Esophagus squamous epithelium (tissue), 5 donors: ENCODE measurements at regions of chr1 and their contacts with region 1.

Region 1: GRCh38 chr1:158203693-158204457 is 23.2 kb downstream of the CD1D start:
- DNase-seq: no peak
- H3K4me3 ChIP-seq: no peak overlapping the region
- H3K27ac ChIP-seq: no peak overlapping the region
- H3K4me1 ChIP-seq: no peaks in the 10 kb centered on the region
- H3K27me3 ChIP-seq: peaks cover 0 to 21% (median 0%) of the 10 kb centered on the region in 4 donors
- CTCF ChIP-seq: peak; percentile 63 to 84 (median 73)
- POLR2A ChIP-seq: no peak

Region 2: DNA sequence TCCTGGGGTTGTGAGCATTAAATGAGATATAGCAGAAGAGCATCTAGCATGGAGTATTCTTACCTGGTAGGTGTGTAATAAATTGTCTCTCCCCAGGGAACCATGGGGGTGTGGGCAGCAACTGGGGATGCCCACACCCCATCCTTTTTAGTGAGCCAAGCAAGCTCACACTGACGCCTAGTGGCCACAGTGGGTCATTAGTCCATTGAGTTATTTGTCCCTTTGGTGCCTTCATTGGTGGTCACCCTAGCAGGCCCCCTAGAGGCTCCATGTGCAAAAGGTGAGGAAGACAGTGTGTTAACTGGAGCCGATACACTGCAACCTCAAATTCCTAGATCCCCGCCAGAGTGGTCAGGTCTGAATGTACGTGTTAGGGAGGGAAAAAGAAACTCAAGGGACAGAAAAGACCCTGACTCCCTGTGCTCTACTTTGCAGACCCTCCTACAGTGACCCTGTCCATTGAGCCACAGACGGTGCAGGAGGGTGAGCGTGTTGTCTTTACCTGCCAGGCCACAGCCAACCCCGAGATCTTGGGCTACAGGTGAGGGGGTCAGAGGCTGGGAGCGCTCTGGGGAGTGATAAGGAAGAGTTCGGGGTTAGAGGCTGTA is 116.5 kb before region 1 on chr1:
- intact Hi-C with region 1: no loop called
- DNase-seq: no peak
- H3K4me3 ChIP-seq: no peak overlapping the region
- H3K27ac ChIP-seq: no peak overlapping the region
- H3K4me1 ChIP-seq: no peaks in the 10 kb centered on the region
- H3K27me3 ChIP-seq: no peaks in the 10 kb centered on the region
- CTCF ChIP-seq: peak; percentile 51 to 85 (median 72)
- POLR2A ChIP-seq: no peak

Region 3: DNA sequence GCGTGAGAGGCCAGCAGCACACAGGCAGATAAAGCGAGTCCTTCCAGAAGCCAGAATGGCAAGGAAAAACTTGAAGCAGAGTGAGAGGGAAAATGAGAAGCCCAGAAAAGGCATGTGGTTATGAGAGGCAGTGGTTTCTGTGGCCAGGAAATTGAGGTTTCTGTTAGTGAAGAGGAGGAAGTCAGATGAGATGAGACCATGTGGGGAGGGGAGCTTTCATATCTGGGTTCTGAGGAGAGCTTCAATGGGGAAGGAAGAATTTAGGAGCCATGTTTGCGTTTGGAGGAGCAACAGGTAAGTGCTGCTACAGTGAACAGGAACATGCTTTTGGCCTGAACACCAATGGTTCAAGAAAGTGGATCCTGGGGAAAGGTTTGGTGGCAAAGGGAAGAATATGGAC is 44.2 kb after region 1 on chr1:
- intact Hi-C with region 1: no loop called
- DNase-seq: peak; percentile 3
- H3K4me3 ChIP-seq: no peak overlapping the region
- H3K27ac ChIP-seq: no peak overlapping the region
- H3K4me1 ChIP-seq: no peaks in the 10 kb centered on the region
- H3K27me3 ChIP-seq: peaks cover 0 to 5% (median 0%) of the 10 kb centered on the region in 4 donors
- CTCF ChIP-seq: no peak
- POLR2A ChIP-seq: no peak

Region 4: DNA sequence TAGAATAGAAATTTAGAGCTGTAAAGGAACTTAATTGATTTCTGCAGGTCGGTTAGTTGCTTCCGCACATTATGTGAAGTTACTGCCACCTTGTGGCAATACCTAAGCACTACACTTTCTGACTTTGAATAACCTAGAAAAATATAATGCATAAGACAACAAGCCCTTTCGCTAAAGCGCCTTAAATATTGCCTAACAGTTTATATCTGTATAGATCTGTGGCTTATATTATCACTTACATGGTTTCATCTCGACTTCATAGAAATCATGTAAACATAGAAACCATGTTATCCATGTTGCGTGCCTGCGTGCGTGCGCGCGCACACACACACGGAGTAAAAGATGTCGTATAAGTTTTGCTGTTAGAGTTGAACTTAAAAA is 794.9 kb after region 1 on chr1:
- intact Hi-C with region 1: loop called (anchors 10 kb)
- DNase-seq: no peak
- H3K4me3 ChIP-seq: peak overlapping the region; percentile 24 to 66 (median 46)
- H3K27ac ChIP-seq: peak overlapping the region; percentile 77 to 93 (median 90)
- H3K4me1 ChIP-seq: peaks cover 0 to 47% (median 7%) of the 10 kb centered on the region in 3 donors
- H3K27me3 ChIP-seq: no peaks in the 10 kb centered on the region
- CTCF ChIP-seq: peak; percentile 86 to 96 (median 92)
- POLR2A ChIP-seq: no peak

Region 5: DNA sequence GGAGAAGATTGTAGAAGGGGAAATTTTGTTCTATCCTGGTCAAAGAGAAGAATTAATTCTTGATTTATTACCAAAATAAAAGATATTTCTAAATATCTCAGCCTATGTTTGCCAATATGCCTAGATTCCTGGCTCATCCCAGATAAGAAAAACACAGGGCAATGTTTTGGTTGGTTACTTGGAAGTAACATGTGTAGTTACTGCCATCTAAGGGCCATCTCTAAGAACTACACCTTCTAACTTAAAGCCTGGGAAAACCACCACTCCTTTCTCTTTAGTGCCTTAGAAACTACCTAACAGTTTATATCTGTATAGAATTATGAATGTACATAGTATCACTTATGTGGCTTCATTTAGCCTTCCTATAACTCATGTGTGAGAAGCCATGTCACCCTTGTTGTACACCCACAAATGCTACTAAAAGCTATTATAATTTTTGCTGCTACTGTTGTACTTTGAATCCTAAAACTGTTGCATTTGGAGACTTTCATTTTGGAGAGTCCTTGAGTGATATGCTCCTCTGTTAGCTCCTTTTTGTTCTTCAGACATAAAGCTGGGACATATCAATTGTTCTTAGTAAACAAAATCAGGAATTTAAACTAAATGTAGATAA is 868.2 kb after region 1 on chr1:
- intact Hi-C with region 1: loop called (anchors 10 kb)
- DNase-seq: no peak
- H3K4me3 ChIP-seq: no peak overlapping the region
- H3K27ac ChIP-seq: no peak overlapping the region
- H3K4me1 ChIP-seq: peaks cover 0 to 45% (median 10%) of the 10 kb centered on the region in 3 donors
- H3K27me3 ChIP-seq: no peaks in the 10 kb centered on the region
- CTCF ChIP-seq: peak in 5 of 6 experiments; percentile 55 to 82 (median 67)
- POLR2A ChIP-seq: no peak